Mammary epithelial cell (primary cell): ENCODE measurements at regions of chr4 and their contacts with region 1.

Region 1: DNA sequence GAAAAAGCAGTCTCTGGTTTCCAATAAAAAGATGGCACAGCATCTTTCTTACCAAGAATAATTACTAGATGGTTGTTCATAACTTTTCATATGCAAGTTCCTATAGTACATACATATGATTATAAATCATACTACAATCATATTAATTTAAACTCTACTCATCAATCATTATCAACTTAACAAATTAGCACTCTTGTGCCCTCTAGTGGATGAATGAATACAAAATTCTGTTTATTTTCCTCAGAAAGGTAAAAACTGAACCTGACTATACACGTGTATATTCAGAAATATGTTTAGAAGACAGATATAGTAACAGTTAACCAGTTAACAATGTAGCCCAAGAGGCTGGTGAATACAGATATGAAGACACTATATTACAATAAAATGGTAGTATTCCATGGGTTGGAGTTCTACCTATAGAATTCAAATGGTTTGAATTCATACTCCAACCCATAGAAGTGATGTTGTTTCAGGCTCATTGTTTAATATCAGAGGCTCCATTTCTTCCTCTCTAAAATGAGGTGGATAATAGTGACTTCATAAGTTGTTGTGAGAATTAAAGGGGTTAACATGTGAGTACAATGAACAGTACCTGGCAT is 100.0 kb downstream of the ADAMTS3 start:
- DNase-seq: peak; percentile 25
- H3K4me3 ChIP-seq: no peak overlapping the region
- H3K27ac ChIP-seq: no peak overlapping the region
- H3K4me1 ChIP-seq: no peaks in the 10 kb centered on the region
- H3K27me3 ChIP-seq: no peaks in the 10 kb centered on the region
- CTCF ChIP-seq: peak; percentile 49 to 51

Region 2: GRCh38 chr4:72295966-72296557 is 172.9 kb before region 1 on chr4:
- CTCF ChIA-PET with region 1: interaction called, 3 read pairs
- dilution Hi-C with region 1: no loop called
- in situ Hi-C with region 1: loop called in 1 of 2 experiments (anchors 10 kb)
- intact Hi-C with region 1: loop called (anchors 1 kb)
- DNase-seq: peak; percentile 34
- H3K4me3 ChIP-seq: no peak overlapping the region
- H3K27ac ChIP-seq: no peak overlapping the region
- H3K4me1 ChIP-seq: no peaks in the 10 kb centered on the region
- H3K27me3 ChIP-seq: no peaks in the 10 kb centered on the region
- CTCF ChIP-seq: peak; percentile 54 to 79

Region 3: DNA sequence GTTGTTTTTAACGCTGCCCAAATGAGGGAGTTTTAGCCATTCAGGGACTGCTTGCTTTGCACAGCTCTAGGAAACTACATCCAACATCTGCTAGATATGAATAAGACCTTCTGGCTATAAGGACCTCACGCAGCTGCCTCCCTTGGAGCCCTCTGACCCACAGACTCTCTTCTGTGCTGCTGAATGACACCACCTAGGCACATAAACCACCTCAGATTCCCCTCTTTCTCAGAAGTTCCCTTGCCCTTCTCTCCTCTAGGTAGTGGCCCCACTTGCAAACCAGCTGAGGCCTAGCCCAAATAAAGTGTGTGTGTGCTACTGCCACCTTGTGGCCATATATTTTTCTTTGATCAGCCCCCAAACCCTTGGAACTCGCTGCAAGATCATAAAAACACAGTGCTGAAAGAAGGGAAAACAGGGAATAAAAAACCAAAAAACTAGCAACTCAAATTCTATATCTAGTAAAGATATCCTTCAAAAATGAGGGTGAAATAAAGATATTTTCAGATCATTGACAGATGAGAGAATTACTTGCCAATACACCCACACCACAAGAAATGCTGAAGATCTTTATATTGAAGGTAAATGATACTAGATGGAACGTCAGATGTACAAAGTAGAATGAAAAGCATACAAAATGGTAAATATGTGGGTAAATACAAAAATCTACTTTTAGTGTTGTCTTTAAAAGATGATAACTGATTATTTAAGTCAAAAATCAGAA is 165.9 kb before region 1 on chr4:
- CTCF ChIA-PET with region 1: no interaction called
- dilution Hi-C with region 1: no loop called
- in situ Hi-C with region 1: loop called in 1 of 2 experiments (anchors 10 kb)
- intact Hi-C with region 1: no loop called
- DNase-seq: peak; percentile 29
- H3K4me3 ChIP-seq: no peak overlapping the region
- H3K27ac ChIP-seq: no peak overlapping the region
- H3K4me1 ChIP-seq: no peaks in the 10 kb centered on the region
- H3K27me3 ChIP-seq: no peaks in the 10 kb centered on the region
- CTCF ChIP-seq: peak; percentile 62 to 66

Region 4: DNA sequence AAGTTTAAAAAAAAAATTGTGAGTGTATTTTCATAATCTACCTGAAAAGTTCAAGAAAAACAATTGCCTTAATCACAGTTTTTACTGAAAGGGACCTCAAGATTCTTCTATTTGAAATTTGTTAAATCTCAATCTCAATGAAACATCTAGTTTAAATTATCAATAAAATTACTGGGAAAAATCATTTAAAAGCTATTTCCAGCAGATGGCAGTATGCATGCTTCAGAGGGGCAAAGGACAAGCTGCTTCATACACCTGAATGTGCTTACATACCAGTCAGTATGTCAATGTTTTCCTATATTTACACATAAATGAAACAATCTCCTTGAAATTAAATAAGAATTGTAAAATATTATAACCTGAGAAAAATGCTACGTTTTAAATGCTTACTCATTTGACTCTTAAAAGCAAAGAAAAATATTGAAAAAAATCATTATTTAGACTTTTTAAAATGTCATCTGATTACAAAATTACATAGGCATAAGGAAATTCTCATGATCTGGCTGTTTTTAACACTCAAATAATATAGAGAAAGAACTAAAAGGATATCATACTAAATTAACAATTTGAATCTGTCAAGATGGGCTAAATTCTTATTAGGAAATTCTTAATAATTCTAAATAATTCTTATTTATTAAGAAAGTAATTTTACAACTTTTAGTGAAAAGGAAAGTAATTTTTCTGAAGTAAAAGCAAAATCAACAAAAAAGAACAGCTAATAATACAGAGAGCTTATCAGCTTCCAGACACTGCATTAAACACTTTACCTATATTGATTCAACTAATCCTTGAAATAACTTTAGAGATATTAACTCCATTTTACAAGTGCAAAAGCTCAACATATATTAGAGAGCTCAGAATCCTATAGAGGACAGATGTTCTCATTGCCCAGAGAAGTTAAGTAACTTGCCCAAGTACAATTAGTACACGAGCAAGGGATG is 142.0 kb before region 1 on chr4:
- CTCF ChIA-PET with region 1: interaction called, 4 read pairs
- dilution Hi-C with region 1: no loop called
- in situ Hi-C with region 1: no loop called
- intact Hi-C with region 1: loop called (anchors 1 kb)
- DNase-seq: no peak
- H3K4me3 ChIP-seq: no peak overlapping the region
- H3K27ac ChIP-seq: no peak overlapping the region
- H3K4me1 ChIP-seq: peaks cover 5% of the 10 kb centered on the region
- H3K27me3 ChIP-seq: no peaks in the 10 kb centered on the region
- CTCF ChIP-seq: peak; percentile 41 to 66

Region 5: GRCh38 chr4:72375073-72375736 is 93.8 kb before region 1 on chr4:
- CTCF ChIA-PET with region 1: no interaction called
- dilution Hi-C with region 1: no loop called
- in situ Hi-C with region 1: no loop called
- intact Hi-C with region 1: no loop called
- DNase-seq: peak; percentile 84
- H3K4me3 ChIP-seq: no peak overlapping the region
- H3K27ac ChIP-seq: peak overlapping the region; percentile 68
- H3K4me1 ChIP-seq: no peaks in the 10 kb centered on the region
- H3K27me3 ChIP-seq: no peaks in the 10 kb centered on the region
- CTCF ChIP-seq: no peak

Region 6: GRCh38 chr4:72546456-72546855 is 77.5 kb after region 1 on chr4:
- CTCF ChIA-PET with region 1: no interaction called
- dilution Hi-C with region 1: no loop called
- in situ Hi-C with region 1: no loop called
- intact Hi-C with region 1: no loop called
- DNase-seq: no peak
- H3K4me3 ChIP-seq: no peak overlapping the region
- H3K27ac ChIP-seq: no peak overlapping the region
- H3K4me1 ChIP-seq: no peaks in the 10 kb centered on the region
- H3K27me3 ChIP-seq: no peaks in the 10 kb centered on the region
- CTCF ChIP-seq: no peak

Region 7: DNA sequence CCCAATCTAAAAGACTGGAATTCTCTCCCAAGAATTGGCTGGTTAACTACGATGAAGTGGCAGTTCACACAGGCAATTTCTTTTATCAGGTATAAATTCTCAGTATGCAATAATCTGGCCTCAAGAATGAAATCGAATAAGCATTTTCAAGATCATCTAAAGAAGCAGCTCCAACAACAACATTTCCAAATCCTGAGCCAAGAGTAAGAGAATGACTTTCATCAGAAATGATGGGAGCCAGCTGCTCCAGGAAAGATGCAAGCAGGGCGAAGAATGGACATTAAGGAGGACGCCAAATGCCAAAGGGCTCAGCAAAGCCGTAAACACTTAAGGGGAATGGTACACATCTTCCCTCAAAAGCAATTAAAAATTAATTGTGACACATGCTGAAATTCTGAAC is 88.0 kb after region 1 on chr4:
- CTCF ChIA-PET with region 1: no interaction called
- dilution Hi-C with region 1: no loop called
- in situ Hi-C with region 1: no loop called
- intact Hi-C with region 1: no loop called
- DNase-seq: no peak
- H3K4me3 ChIP-seq: no peak overlapping the region
- H3K27ac ChIP-seq: no peak overlapping the region
- H3K4me1 ChIP-seq: no peaks in the 10 kb centered on the region
- H3K27me3 ChIP-seq: peaks cover 11% of the 10 kb centered on the region
- CTCF ChIP-seq: no peak

Region 8: GRCh38 chr4:72567821-72568675 is 99.0 kb after region 1 on chr4:
- CTCF ChIA-PET with region 1: no interaction called
- dilution Hi-C with region 1: loop called (anchors 5 kb)
- in situ Hi-C with region 1: no loop called
- intact Hi-C with region 1: no loop called
- DNase-seq: peak; percentile 82
- H3K4me3 ChIP-seq: peak overlapping the region; percentile 55 to 73 (median 60)
- H3K27ac ChIP-seq: no peak overlapping the region
- H3K4me1 ChIP-seq: peaks cover 17% of the 10 kb centered on the region
- H3K27me3 ChIP-seq: peaks cover 1% of the 10 kb centered on the region
- CTCF ChIP-seq: peak; percentile 44 to 50